Aorta (tissue), 5 donors: ENCODE measurements at regions of chr20 and their contacts with region 1.

Region 1: DNA sequence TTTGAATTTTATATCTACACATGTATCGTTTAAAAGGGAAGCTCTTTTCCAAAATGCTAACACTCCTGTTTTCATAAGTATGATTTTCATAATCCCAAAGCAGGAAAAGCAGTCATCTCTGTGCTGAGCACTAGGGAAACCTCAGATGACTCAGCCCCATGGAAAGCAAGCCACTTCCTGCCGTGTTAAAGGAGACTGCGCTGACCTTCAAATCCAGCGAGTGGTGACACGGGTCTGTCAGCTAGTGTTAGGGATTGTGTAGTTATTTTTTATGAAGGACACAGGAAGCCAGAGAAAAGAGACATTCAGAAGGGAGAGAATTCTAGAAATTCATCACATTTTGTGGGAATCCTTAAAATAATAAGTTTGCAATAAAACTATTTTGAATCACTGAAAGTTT is 57.0 kb upstream of the CD93 start:
- DNase-seq: peak in 1 of 2 donors; percentile 89
- ATAC-seq: peak; percentile 61
- H3K4me3 ChIP-seq: no peak overlapping the region
- H3K27ac ChIP-seq: no peak overlapping the region
- H3K4me1 ChIP-seq: peaks cover 0 to 8% of the 10 kb centered on the region in 2 donors
- H3K27me3 ChIP-seq: no peaks in the 10 kb centered on the region

Region 2: GRCh38 chr20:23086056-23086566 is 57.0 kb before region 1 on chr20 and contains the start of gene CD93:
- intact Hi-C with region 1: loop called (anchors 2 to 5 kb)
- DNase-seq: peak; percentile 72 to 89
- ATAC-seq: peak; percentile 79
- H3K4me3 ChIP-seq: no peak within 1 kb of the TSS
- H3K27ac ChIP-seq: peak within 1 kb of the TSS; percentile 71 to 89
- H3K4me1 ChIP-seq: peaks cover 0 to 2% of the 10 kb centered on the region in 2 donors
- H3K27me3 ChIP-seq: no peaks in the 10 kb centered on the region
- total RNA-seq, gene CD93: 123 to 160 TPM

Region 3: DNA sequence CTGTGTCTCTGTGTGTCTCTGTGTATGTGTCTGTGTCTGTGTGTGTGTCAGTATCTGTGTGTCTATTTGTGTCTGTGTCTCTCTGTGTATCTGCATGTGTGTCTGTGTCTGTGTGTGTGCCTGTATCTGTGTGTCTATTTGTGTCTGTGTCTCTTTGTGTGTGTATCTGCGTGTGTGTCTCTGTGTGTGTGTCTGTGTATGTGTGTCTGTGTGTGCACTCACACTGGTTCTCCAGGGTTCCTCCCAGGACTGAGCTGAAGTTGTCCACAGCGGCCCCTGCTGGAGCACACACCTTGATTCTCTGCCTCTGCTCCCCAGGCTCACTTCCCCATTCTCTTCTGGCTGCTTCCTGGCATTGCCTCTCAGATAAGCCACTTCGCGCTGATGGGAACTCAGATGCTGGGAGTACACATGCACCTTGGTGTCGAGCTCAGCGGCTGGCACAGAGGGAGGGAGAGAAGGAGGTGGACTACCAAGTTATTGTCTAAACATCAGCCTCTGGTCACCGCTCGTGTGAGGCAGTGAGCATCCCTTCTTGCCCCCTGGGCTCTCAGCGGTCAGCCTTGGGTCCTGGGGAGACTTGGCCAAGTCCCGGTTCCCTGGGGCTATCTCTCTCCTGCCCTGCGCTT is 102.6 kb after region 1 on chr20:
- intact Hi-C with region 1: no loop called
- DNase-seq: peak in 1 of 2 donors; percentile 82
- ATAC-seq: peak; percentile 63
- H3K4me3 ChIP-seq: no peak overlapping the region
- H3K27ac ChIP-seq: no peak overlapping the region
- H3K4me1 ChIP-seq: peaks cover 0 to 2% of the 10 kb centered on the region in 2 donors
- H3K27me3 ChIP-seq: no peaks in the 10 kb centered on the region